Heart right ventricle (tissue), 16 donors: ENCODE measurements at regions of chr2 and their contacts with region 1.

Region 1: GRCh38 chr2:45650851-45651414 is 542 bp upstream of the PRKCE start:
- DNase-seq: peak; percentile 90 to 98
- ATAC-seq: peak; percentile 74 to 86 (median 82)
- H3K4me3 ChIP-seq: peak overlapping the region; percentile 56 to 94 (median 78)
- H3K27ac ChIP-seq: peak overlapping the region; percentile 97 to 100 (median 98)
- H3K4me1 ChIP-seq: peaks cover 12 to 54% (median 34%) of the 10 kb centered on the region in 9 donors
- H3K27me3 ChIP-seq: no peaks in the 10 kb centered on the region
- CTCF ChIP-seq: peak; percentile 9 to 65 (median 43)

Region 2: DNA sequence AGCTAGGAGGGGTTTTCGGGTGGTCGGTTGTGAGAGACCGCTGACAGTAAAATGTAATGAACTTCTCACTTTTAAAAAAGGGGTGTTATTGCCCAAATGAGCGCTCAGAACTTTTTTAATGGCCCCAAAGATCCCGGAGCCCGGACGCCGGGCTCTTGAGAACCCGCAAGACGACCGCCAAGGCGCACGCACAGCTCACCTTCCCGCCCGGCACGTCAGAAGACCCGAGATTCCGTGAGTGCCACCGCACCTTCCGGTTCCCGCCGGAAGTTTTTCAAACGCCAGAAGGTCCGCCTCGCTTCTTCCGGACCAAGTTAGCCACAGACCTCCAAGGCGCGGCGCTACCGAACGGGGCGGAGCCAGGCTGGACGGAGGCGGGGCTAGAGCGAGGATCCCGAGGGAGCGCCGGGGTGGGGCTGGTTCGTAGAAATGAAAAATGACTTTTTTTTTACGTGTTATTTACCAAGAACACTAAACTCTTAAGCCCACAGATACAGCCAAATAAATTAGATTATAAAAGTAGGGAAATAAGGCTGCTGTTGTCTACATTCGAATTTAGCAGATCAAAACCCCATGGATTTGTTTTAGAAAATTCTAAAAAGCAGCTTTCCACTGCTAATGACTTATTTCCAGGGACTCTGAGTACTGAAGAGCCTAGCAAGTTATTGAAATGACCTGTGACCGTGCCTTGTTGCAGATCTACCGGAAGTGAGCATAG is 39.8 kb before region 1 on chr2 and contains the start of gene SRBD1:
- intact Hi-C with region 1: no loop called
- DNase-seq: peak; percentile 94 to 96
- ATAC-seq: peak; percentile 97 to 99 (median 98)
- H3K4me3 ChIP-seq: peak within 1 kb of the TSS; percentile 54 to 86 (median 78)
- H3K27ac ChIP-seq: peak within 1 kb of the TSS; percentile 31 to 94 (median 91)
- H3K4me1 ChIP-seq: peaks cover 3 to 21% (median 12%) of the 10 kb centered on the region in 9 donors
- H3K27me3 ChIP-seq: no peaks in the 10 kb centered on the region
- CTCF ChIP-seq: no peak
- total RNA-seq, gene SRBD1: 7.4 to 13.5 (median 11.2) TPM

Region 3: GRCh38 chr2:45691171-45691999 is 40.5 kb after region 1 on chr2:
- intact Hi-C with region 1: loop called in 2 of 10 experiments (anchors 5 kb)
- DNase-seq: no peak
- ATAC-seq: peak in 7 of 8 donors; percentile 42 to 82 (median 75)
- H3K4me3 ChIP-seq: no peak overlapping the region
- H3K27ac ChIP-seq: no peak overlapping the region
- H3K4me1 ChIP-seq: peaks cover 6 to 51% (median 31%) of the 10 kb centered on the region in 9 donors
- H3K27me3 ChIP-seq: no peaks in the 10 kb centered on the region
- CTCF ChIP-seq: no peak

Region 4: GRCh38 chr2:45699032-45699658 is 48.2 kb after region 1 on chr2:
- intact Hi-C with region 1: loop called in 2 of 10 experiments (anchors 5 kb)
- DNase-seq: no peak
- ATAC-seq: peak in 2 of 8 donors; percentile 39 to 42
- H3K4me3 ChIP-seq: no peak overlapping the region
- H3K27ac ChIP-seq: peak overlapping the region in 2 of 10 donors; percentile 20 to 34
- H3K4me1 ChIP-seq: peaks cover 0 to 50% (median 30%) of the 10 kb centered on the region in 9 donors
- H3K27me3 ChIP-seq: no peaks in the 10 kb centered on the region
- CTCF ChIP-seq: no peak

Region 5: DNA sequence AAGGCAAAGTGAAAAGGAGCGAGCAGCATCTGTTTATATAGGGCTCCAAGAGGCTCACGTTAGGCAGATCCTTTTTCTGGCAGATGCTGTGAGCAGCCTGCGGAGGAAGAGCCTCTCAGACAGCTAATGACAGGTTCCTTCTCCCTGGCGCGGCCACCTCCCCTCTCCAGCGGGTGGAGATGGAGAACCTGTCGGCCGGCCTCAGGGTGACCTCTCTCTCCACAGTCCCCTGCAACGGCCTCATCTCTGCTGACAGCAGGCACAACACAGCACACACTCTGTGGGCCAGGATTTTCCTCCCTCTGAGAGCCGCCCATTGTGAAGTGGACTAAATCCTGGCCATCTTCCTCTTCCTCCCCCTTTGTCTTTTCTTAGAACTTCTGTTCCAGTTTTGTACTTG is 120.3 kb after region 1 on chr2:
- intact Hi-C with region 1: loop called in 6 of 10 experiments (anchors 2 to 5 kb)
- DNase-seq: peak; percentile 69 to 81
- ATAC-seq: peak; percentile 89 to 95 (median 92)
- H3K4me3 ChIP-seq: peak overlapping the region in 8 of 10 donors; percentile 16 to 44 (median 26)
- H3K27ac ChIP-seq: peak overlapping the region; percentile 19 to 80 (median 72)
- H3K4me1 ChIP-seq: peaks cover 16 to 76% (median 47%) of the 10 kb centered on the region in 9 donors
- H3K27me3 ChIP-seq: no peaks in the 10 kb centered on the region
- CTCF ChIP-seq: peak in 1 of 9 donors; percentile 6

Region 6: GRCh38 chr2:45778720-45779171 is 127.8 kb after region 1 on chr2:
- intact Hi-C with region 1: loop called in 5 of 10 experiments (anchors 2 to 5 kb)
- DNase-seq: peak in 1 of 2 donors; percentile 70
- ATAC-seq: peak; percentile 30 to 72 (median 63)
- H3K4me3 ChIP-seq: no peak overlapping the region
- H3K27ac ChIP-seq: no peak overlapping the region
- H3K4me1 ChIP-seq: peaks cover 0 to 71% (median 19%) of the 10 kb centered on the region in 9 donors
- H3K27me3 ChIP-seq: no peaks in the 10 kb centered on the region
- CTCF ChIP-seq: peak; percentile 73 to 87 (median 83)

Region 7: GRCh38 chr2:45935791-45936622 is 285.1 kb after region 1 on chr2:
- intact Hi-C with region 1: no loop called
- DNase-seq: peak; percentile 89 to 90
- ATAC-seq: peak; percentile 84 to 96 (median 88)
- H3K4me3 ChIP-seq: peak overlapping the region in 1 of 10 donors; percentile 15
- H3K27ac ChIP-seq: peak overlapping the region in 7 of 10 donors; percentile 2 to 48 (median 42)
- H3K4me1 ChIP-seq: peaks cover 0 to 34% (median 22%) of the 10 kb centered on the region in 9 donors
- H3K27me3 ChIP-seq: no peaks in the 10 kb centered on the region
- CTCF ChIP-seq: peak; percentile 60 to 89 (median 80)